GM10248 (cell line): ENCODE measurements at regions of chr12 and their contacts with region 1.

Region 1: DNA sequence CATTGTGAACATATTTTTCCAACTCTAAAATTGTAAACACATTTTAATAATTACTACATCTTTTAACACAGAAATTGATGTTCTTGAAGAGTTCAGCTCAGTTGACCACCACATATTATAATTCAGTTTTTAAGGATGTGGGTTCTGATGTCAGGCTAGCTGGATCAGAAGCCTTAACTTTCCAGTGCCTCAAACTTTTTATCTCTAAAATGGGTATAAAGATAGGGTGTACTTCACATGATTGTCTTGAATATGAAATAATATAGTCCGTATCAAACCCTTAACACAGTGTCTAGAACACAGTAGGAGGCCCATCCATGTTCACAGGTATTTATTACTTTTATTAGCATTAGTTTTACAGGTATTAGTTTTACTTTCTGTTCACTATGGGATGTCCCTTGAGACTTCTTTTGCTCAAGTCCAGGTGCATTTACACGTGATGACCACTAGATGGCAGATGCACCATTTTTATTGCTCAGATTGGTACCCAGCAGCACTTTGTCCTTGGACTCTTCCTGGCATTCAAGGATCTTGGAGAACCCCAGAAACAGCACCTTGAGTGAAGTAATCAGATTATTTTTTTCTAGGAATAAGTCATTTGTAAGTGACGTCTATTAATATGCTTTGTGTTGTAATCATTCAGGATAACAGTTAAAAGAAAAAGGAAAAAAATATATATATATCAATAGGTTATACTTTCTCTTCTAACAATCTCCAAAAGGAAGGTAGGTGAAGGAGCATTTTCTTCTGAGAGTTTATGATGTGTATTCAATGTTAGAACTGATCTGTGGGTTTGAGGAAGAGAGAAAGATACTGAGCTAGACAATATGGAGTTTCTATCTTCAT is 580.2 kb downstream of the ETNK1 start:
- DNase-seq: peak; percentile 56
- CTCF ChIP-seq: peak; percentile 93

Region 2: DNA sequence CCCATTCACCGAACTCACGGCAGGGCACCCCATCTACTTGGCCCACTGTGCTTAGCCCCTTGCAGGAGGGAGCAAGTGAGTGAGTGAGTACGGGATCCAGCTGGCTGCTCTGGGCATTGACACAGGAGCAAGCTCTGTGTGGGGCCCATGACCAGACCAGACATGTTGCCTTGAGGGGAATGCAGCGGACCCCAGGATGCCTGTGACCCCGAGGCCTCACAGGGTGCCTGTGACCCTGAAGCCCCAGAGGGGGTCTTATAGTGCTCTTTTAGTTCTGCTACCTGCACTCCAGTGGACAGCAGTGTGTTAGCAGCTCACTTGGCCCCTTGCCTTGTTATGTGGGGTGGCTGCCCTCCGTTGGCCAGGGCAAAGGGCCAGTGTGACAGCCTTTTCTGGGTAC is 324.3 kb before region 1 on chr12:
- CTCF ChIA-PET with region 1: no interaction called
- POLR2A ChIA-PET with region 1: no interaction called
- DNase-seq: no peak
- CTCF ChIP-seq: no peak

Region 3: DNA sequence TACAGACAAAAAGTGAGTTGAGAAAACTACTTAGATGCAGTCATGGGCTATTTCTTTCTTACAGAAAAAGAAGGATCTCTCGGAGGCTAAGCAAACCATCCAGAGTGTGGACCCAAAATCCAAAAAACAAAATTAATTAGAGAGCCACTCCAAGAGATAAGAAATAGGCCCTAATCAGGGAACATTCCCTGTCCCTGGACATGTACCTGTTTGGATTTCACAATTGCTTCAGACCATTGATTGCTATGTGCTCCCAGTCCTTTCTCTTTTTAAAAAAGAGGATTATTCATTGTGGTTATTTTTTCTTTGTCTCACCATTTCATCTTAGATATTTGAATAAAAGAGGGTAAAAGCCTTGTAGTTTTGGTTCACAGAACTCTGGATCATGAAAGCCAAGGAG is 30.2 kb before region 1 on chr12:
- CTCF ChIA-PET with region 1: no interaction called
- POLR2A ChIA-PET with region 1: no interaction called
- DNase-seq: no peak
- CTCF ChIP-seq: no peak

Region 4: DNA sequence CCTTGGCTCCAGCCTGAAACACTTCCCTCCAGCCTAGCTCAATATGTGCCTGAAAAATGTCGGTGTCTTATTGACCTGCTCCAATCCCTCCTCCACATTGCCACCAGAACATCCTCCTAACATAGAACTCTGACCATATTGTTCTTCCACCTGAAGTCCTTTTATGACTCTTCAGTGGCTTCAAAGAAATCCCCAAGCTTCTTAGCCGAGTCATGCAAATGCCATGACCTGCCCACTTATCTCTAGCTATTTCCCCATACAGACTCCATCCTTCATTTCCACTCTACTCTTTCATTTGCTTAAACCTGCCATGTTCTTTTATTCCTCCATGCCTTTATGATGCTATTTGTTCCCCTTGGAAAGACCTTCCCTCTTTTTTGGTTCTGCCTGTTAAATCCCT is 11.6 kb before region 1 on chr12:
- CTCF ChIA-PET with region 1: interaction called, 14 read pairs
- POLR2A ChIA-PET with region 1: no interaction called
- DNase-seq: no peak
- CTCF ChIP-seq: no peak

Region 5: GRCh38 chr12:23221066-23221465 is 15.9 kb after region 1 on chr12:
- CTCF ChIA-PET with region 1: interaction called, 14 read pairs
- POLR2A ChIA-PET with region 1: no interaction called
- DNase-seq: no peak
- CTCF ChIP-seq: no peak

Region 6: GRCh38 chr12:23262670-23263069 is 57.5 kb after region 1 on chr12:
- CTCF ChIA-PET with region 1: no interaction called
- POLR2A ChIA-PET with region 1: no interaction called
- DNase-seq: no peak
- CTCF ChIP-seq: no peak